MCF 10A (cell line): ENCODE measurements at regions of chr19 and their contacts with region 1.

Region 1: DNA sequence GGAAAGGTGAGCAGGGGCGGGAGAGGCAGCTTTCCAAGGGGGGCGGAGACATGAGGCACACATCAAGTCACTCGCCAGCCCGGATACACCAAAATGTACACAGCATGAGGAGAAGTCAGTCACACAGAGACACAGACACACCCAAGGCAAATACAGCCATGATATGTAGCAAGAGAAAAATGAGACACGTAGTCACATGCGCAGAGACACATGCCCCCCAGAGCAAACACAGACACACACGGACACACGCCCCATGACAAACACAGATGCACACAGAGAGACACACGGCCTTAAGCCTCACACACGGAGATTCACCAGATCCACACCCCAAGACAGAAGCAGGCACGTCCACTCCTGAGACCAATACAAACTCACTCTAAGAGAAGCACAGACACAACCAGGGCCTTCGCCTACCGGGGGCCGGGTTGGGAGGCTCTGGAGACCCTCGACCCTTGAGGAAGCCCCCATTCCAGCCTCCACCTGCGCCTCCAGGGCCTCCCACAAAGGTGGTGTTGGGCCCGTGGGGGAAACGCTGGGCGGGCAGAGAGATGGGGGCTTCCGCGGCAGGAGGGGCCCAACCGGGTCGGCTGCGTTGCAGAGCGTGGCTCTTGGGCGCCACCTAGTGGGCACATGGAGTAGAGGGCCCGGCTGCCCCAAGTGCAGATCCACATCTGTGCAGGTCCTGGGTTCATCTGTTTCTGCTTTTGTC is 10.2 kb upstream of the TINCR start:
- DNase-seq: peak; percentile 65
- H3K4me3 Mint-ChIP-seq: no peak overlapping the region
- H3K27ac Mint-ChIP-seq: no peak overlapping the region
- H3K4me1 Mint-ChIP-seq: peaks cover 12% of the 10 kb centered on the region
- H3K27me3 Mint-ChIP-seq: no peaks in the 10 kb centered on the region
- CTCF ChIP-seq: peak; percentile 99

Region 2: DNA sequence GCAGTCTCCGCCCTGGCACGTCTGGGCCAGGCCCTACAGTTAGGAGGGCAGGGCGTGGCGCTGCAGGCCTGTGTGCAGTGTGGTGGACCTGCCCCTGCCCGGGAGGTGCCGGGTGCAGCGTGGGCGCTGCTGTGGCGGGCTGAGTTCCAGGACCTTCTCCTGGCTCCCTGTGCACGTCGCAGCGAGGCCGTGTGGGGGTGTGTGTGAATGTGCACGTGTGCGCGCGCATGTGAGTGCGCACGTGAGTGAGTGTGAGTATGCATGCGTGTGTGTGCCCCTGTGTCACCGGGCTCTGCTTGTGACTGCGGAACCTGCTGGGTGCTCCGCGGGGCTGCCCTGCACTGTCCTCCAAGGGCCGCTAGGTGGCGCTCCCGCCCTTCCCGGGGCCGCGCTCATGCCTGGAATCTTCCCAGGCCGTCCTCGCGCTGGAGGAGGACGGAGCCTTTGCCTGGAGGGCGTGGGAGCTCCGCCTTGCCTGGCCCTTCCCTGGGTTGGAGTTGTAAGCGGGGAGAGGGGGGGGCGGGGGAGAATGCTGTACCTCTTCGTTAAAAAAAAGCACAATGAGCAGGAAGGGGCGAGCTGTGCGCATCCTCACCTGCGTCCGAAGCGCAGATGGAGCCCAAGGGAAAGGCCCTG is 529.7 kb before region 1 on chr19:
- CTCF ChIA-PET with region 1: interaction called, 6 read pairs
- POLR2A ChIA-PET with region 1: no interaction called
- intact Hi-C with region 1: loop called (anchors 1 kb)
- DNase-seq: peak; percentile 82
- H3K4me3 Mint-ChIP-seq: peak overlapping the region; percentile 21
- H3K27ac Mint-ChIP-seq: no peak overlapping the region
- H3K4me1 Mint-ChIP-seq: no peaks in the 10 kb centered on the region
- H3K27me3 Mint-ChIP-seq: no peaks in the 10 kb centered on the region
- CTCF ChIP-seq: peak; percentile 99

Region 3: DNA sequence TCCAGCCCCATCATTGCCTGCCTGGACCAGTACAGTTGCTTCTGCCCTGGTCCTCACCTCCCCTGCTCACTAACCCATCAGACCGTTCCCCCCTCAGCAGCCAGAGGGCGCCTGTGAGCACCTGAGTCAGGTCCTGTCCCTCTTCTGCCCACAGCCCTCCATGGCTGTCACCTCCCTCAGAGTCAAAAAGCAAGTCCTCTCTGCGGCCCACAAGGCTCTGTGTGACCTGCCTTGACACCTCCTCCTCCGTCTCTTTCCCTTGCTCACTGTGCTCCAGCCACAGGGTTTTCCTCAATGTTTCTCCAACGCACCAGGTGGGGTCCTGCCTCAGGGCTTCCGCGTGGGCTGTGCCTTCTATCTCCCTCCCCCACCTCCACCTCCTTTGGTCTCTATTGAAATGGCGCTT is 208.0 kb before region 1 on chr19:
- CTCF ChIA-PET with region 1: no interaction called
- POLR2A ChIA-PET with region 1: no interaction called
- intact Hi-C with region 1: loop called (anchors 1 kb)
- DNase-seq: peak; percentile 66
- H3K4me3 Mint-ChIP-seq: no peak overlapping the region
- H3K27ac Mint-ChIP-seq: no peak overlapping the region
- H3K4me1 Mint-ChIP-seq: no peaks in the 10 kb centered on the region
- H3K27me3 Mint-ChIP-seq: peaks cover 16% of the 10 kb centered on the region
- CTCF ChIP-seq: peak; percentile 51

Region 4: DNA sequence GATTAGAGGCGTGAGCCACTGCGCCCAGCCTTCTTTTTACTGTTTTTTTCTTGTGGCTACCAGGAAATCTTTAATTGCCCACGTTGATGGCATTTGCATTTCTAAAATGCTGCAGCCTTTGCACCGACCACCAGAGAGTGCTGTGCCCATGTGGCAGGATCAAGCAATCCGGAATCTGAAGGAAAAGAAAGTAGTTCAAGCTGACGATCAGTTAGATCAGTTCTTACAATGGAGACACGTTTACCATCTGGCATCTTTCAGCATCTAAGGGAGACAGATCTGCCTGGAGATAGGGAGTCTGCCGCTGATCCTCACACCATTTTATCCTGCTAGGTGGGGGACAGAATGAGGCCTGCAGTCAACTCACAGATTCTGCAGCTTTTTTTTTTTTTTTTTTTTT is 30.1 kb before region 1 on chr19:
- CTCF ChIA-PET with region 1: interaction called, 3 read pairs
- POLR2A ChIA-PET with region 1: no interaction called
- intact Hi-C with region 1: loop called (anchors 1 kb)
- DNase-seq: peak; percentile 51
- H3K4me3 Mint-ChIP-seq: no peak overlapping the region
- H3K27ac Mint-ChIP-seq: no peak overlapping the region
- H3K4me1 Mint-ChIP-seq: peaks cover 14% of the 10 kb centered on the region
- H3K27me3 Mint-ChIP-seq: no peaks in the 10 kb centered on the region
- CTCF ChIP-seq: peak; percentile 30